Activated T-helper 2 cell treated with anti-CD3 and anti-CD28 coated beads, Interferon-gamma antibody, Interleukin-2, Interleukin-4, amounts not matched to agents 10 μg/mL and 5 μg/mL and 100 μg/mL, durations not matched to agents 14 hours and 24 hours and 36 hours (primary cell): ENCODE measurements at regions of chr1 and their contacts with region 1.

Region 1: DNA sequence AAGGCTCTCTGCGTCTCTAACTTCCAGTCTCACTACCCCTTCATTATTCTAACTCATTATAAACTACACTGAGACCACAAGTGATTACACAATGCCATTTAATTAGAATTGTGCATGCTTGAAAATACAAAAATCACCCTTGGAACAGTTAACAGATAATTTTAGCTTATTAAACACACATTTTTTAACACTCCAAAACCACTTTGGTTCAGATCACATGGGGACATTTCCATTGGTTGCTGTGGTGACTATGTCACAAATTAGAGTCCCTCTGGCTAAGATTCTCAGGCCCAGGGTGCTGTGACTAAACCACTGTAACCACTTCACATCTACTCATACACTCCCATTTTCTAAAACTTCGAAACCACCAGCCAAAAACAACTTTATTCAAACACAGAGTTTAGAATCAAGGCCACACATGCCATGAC is 43.0 kb downstream of the JAK1 start:
- DNase-seq: no peak
- H3K4me3 Mint-ChIP-seq: peak overlapping the region; percentile 15
- H3K27ac Mint-ChIP-seq: peak overlapping the region; percentile 87
- H3K4me1 Mint-ChIP-seq: peaks cover 71% of the 10 kb centered on the region
- H3K27me3 Mint-ChIP-seq: no peaks in the 10 kb centered on the region

Region 2: DNA sequence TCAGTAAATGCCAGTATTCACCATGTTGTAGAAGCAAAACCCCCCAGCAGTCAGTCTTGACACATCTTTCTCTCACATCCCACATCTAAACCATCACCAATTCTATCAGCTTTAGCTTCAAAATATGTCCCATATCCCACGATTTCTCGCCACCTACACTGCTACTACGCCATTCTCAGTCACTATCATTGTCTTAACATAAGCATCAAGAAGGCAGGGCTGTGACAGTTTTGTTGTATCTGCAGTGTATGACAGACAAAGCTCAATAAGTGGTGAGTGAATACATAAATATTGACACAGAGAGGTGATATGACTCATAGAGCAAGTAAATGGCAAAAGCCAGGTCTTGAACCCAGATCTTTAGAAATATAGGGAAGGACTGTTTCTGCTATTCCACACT is 16.9 kb before region 1 on chr1:
- intact Hi-C with region 1: loop called (anchors 1 kb)
- DNase-seq: no peak
- H3K4me3 Mint-ChIP-seq: peak overlapping the region; percentile 0
- H3K27ac Mint-ChIP-seq: peak overlapping the region; percentile 63
- H3K4me1 Mint-ChIP-seq: peaks cover 53% of the 10 kb centered on the region
- H3K27me3 Mint-ChIP-seq: no peaks in the 10 kb centered on the region

Region 3: DNA sequence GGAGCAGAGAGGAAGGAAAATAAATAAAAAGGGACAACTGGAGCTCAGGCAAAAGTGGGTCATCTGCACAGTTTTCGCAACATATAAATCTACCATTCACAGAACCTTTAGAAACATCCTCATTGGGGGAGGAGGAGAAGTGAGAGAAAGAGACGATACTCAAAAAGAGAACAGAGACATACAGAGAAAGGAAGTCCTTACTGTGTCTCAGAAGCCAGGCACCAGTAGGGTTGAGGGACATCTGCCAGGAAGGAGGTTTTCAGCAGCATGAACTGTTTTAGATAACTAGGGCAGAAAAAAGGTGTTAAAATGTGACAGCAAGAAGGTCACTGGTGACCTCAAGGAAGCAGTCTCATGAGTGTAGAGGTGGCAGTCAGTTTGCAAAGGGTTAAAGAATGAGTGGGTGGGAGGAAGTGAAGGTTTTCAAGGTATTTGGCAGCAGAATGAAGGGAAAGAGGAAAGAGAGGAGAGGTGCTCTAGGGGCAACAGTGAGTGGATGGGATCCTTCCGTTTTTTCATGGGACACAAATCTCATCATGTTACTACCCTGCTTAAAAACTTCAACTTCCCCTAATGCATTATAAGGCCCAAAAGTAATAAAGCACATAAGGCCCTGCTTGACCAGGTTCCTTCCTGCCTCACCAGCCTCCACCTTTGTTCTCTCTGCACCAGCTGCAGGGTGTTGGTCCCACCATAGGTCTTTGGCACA is 33.6 kb after region 1 on chr1:
- intact Hi-C with region 1: loop called (anchors 1 kb)
- DNase-seq: no peak
- H3K4me3 Mint-ChIP-seq: no peak overlapping the region
- H3K27ac Mint-ChIP-seq: no peak overlapping the region
- H3K4me1 Mint-ChIP-seq: peaks cover 40% of the 10 kb centered on the region
- H3K27me3 Mint-ChIP-seq: no peaks in the 10 kb centered on the region

Region 4: DNA sequence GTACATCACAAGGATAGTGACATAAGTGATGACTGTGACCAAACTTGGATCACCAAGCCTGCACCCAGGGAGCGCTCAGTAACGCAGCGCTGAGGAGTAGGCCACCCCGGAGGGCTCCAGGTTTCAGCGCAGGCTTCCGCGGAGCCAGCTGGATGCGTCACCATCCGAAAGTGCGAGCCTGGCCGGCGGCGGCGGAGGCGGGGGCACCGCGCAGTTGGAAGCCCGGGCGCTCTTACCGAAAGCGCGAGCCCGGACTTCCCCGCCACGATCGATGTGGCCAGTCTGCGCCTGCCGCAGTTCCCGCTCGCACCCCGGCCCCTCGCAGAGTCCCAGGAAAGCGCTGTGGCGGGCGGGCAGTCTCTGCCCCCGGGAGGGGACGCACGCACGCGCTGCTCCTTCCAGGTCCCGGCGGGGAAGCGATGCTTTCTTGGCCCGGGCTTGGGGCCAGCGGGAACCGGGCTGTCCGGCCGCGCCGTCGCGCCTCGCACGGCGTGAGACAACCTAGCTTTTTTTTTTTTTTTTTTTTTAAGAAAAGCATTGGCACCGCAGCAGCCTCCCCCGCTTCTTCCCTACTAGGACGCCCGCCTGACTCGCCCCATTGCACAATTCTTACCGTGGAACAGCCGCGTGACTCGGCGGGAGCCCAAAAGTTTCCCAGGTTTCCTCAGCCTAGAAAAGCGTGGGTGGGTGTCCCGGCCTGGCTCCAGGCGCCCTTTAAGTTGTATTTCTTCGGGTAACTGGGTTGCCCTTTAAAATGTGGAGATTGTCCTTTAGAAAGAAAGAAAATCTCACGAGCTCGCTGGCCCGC is 79.4 kb after region 1 on chr1:
- intact Hi-C with region 1: loop called (anchors 2 kb)
- DNase-seq: peak; percentile 50
- H3K4me3 Mint-ChIP-seq: peak overlapping the region; percentile 67
- H3K27ac Mint-ChIP-seq: no peak overlapping the region
- H3K4me1 Mint-ChIP-seq: peaks cover 34% of the 10 kb centered on the region
- H3K27me3 Mint-ChIP-seq: peaks cover 32% of the 10 kb centered on the region

Region 5: GRCh38 chr1:65148548-65149350 is 225.4 kb after region 1 on chr1:
- intact Hi-C with region 1: no loop called
- DNase-seq: peak; percentile 43
- H3K4me3 Mint-ChIP-seq: peak overlapping the region; percentile 90
- H3K27ac Mint-ChIP-seq: peak overlapping the region; percentile 88
- H3K4me1 Mint-ChIP-seq: peaks cover 40% of the 10 kb centered on the region
- H3K27me3 Mint-ChIP-seq: peaks cover 14% of the 10 kb centered on the region

Region 6: DNA sequence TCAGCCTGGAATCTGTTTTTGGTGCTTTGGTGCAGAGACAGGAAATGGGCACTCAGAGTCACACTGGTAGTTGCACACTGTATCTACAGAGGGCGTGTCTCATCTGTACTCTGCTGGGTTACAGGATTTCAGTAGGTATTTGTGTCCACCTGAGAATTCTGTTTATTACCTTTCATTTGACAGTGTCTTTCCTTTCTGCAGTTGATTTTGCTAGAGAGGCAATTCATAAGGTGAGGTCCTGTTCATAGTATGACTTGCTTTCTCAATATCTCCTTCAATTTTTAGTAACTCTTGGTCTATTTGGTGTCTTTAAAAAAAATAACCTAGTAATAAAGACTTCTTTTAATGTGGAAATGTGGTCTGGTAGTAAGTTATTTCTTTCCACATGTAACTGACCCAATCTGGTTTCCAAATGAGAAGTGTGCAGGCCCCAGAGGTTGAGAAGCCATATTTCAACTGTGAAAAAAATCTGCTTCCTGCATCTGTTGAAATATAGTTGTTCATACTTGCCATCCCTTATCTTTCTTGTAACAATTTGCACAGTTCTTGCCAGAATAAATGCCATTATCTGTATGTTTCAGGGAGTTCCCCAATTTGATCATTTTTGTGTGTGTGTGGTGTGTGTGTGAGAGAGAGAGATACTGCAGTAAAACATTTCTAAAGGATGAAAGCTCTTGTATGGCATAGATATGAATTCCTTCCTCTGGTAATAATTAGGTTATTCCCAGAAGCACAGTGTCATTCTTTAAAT is 307.6 kb after region 1 on chr1:
- intact Hi-C with region 1: loop called (anchors 1 kb)
- DNase-seq: no peak
- H3K4me3 Mint-ChIP-seq: peak overlapping the region; percentile 26
- H3K27ac Mint-ChIP-seq: peak overlapping the region; percentile 79
- H3K4me1 Mint-ChIP-seq: peaks cover 34% of the 10 kb centered on the region
- H3K27me3 Mint-ChIP-seq: no peaks in the 10 kb centered on the region

Region 7: GRCh38 chr1:65377496-65378246 is 454.4 kb after region 1 on chr1:
- intact Hi-C with region 1: no loop called
- DNase-seq: no peak
- H3K4me3 Mint-ChIP-seq: no peak overlapping the region
- H3K27ac Mint-ChIP-seq: no peak overlapping the region
- H3K4me1 Mint-ChIP-seq: no peaks in the 10 kb centered on the region
- H3K27me3 Mint-ChIP-seq: peaks cover 12% of the 10 kb centered on the region